ENCODE measurements at regions of chr11 and their contacts with region 1.

Region 1: GRCh38 chr11:96342961-96343711 is at the start of gene MAML2:
- DNase-seq: peak; percentile 89
- H3K4me3 ChIP-seq: peak within 1 kb of the TSS; percentile 81
- H3K27ac ChIP-seq: peak within 1 kb of the TSS; percentile 40
- H3K27me3 ChIP-seq: no peaks in the 10 kb centered on the region
- CTCF ChIP-seq: peak; percentile 93
- polyA plus RNA-seq, gene MAML2: 23.0 TPM in 2 replicates

Region 2: DNA sequence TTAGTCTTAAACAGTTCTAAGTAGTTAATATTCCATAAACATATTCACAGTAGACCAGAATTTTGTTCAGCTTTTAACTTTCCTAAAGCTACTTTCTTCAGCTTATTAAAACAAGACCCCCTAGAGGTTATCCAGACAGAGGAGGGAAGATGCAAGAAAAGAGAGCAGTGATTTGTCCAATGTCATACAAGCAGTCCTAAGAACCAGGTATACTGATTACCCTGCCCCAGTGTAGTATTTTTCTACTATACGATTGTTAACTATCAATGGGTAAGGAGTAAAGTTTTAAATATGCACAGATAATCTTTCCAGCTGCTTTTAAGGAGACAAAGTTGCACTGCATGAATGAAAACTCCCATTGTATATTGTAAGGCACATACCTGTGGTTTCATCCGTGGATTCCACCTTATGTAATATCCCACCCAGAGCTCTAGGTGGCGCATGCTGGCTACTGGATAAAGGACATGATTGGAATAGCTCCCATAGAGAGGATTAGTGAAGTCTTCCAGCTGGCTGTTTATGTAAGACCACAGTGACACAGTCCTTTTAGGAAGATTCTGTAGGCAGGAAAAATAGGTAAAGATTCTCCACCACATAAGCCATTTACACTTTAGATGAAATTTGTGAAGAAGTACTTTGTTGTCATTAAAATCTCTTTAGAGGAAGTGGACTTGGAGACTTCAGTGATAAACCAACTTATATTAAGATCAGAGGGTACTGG is 507.2 kb before region 1 on chr11:
- CTCF ChIA-PET with region 1: interaction called, 48 read pairs
- POLR2A ChIA-PET with region 1: no interaction called
- DNase-seq: peak; percentile 93
- H3K4me3 ChIP-seq: no peak overlapping the region
- H3K27ac ChIP-seq: no peak overlapping the region
- H3K27me3 ChIP-seq: no peaks in the 10 kb centered on the region
- CTCF ChIP-seq: peak; percentile 88

Region 3: GRCh38 chr11:96037405-96037936 is 305.7 kb before region 1 on chr11:
- CTCF ChIA-PET with region 1: interaction called, 10 read pairs
- POLR2A ChIA-PET with region 1: no interaction called
- DNase-seq: no peak
- H3K4me3 ChIP-seq: no peak overlapping the region
- H3K27ac ChIP-seq: no peak overlapping the region
- H3K27me3 ChIP-seq: no peaks in the 10 kb centered on the region
- CTCF ChIP-seq: 0 out of 2 replicates have a peak, but pooled peaks have one; percentile 8

Region 4: GRCh38 chr11:96107143-96107824 is 235.9 kb before region 1 on chr11:
- CTCF ChIA-PET with region 1: interaction called, 13 read pairs
- POLR2A ChIA-PET with region 1: no interaction called
- DNase-seq: no peak
- H3K4me3 ChIP-seq: no peak overlapping the region
- H3K27ac ChIP-seq: no peak overlapping the region
- H3K27me3 ChIP-seq: no peaks in the 10 kb centered on the region
- CTCF ChIP-seq: no peak

Region 5: GRCh38 chr11:96199563-96200025 is 143.5 kb before region 1 on chr11:
- CTCF ChIA-PET with region 1: interaction called, 10 read pairs
- POLR2A ChIA-PET with region 1: interaction called, 4 read pairs
- DNase-seq: no peak
- H3K4me3 ChIP-seq: no peak overlapping the region
- H3K27ac ChIP-seq: no peak overlapping the region
- H3K27me3 ChIP-seq: no peaks in the 10 kb centered on the region
- CTCF ChIP-seq: no peak

Region 6: DNA sequence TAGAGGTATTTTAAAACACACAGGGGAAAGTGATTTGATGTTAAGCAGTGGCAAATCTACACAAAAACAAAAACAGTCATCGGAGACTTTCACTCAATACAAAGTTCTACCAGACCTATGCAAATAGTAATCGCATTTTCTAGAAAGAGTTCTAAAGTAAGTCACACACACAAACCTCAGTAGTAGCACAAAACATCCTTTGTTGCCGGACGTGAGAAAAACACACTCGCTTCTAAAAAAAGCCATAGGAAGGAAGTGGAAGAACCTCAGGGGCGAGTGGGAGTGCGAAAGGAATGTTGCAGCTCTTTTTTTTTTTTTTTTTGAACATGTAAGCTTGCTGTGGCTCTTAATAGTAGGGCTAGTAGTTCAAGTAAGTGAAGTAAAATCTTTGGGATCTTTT is 89.0 kb before region 1 on chr11:
- CTCF ChIA-PET with region 1: interaction called, 14 read pairs
- POLR2A ChIA-PET with region 1: interaction called, 3 read pairs
- DNase-seq: no peak
- H3K4me3 ChIP-seq: no peak overlapping the region
- H3K27ac ChIP-seq: no peak overlapping the region
- H3K27me3 ChIP-seq: no peaks in the 10 kb centered on the region
- CTCF ChIP-seq: no peak

Region 7: GRCh38 chr11:96331699-96332116 is 11.4 kb before region 1 on chr11:
- CTCF ChIA-PET with region 1: interaction called, 12 read pairs
- POLR2A ChIA-PET with region 1: no interaction called
- DNase-seq: no peak
- H3K4me3 ChIP-seq: no peak overlapping the region
- H3K27ac ChIP-seq: no peak overlapping the region
- H3K27me3 ChIP-seq: no peaks in the 10 kb centered on the region
- CTCF ChIP-seq: no peak

Region 8: GRCh38 chr11:96781082-96781481 is 437.9 kb after region 1 on chr11:
- CTCF ChIA-PET with region 1: no interaction called
- POLR2A ChIA-PET with region 1: no interaction called
- DNase-seq: no peak
- H3K4me3 ChIP-seq: no peak overlapping the region
- H3K27ac ChIP-seq: no peak overlapping the region
- H3K27me3 ChIP-seq: no peaks in the 10 kb centered on the region
- CTCF ChIP-seq: no peak